ENCODE measurements at regions of chr17 and their contacts with region 1.

Region 1: DNA sequence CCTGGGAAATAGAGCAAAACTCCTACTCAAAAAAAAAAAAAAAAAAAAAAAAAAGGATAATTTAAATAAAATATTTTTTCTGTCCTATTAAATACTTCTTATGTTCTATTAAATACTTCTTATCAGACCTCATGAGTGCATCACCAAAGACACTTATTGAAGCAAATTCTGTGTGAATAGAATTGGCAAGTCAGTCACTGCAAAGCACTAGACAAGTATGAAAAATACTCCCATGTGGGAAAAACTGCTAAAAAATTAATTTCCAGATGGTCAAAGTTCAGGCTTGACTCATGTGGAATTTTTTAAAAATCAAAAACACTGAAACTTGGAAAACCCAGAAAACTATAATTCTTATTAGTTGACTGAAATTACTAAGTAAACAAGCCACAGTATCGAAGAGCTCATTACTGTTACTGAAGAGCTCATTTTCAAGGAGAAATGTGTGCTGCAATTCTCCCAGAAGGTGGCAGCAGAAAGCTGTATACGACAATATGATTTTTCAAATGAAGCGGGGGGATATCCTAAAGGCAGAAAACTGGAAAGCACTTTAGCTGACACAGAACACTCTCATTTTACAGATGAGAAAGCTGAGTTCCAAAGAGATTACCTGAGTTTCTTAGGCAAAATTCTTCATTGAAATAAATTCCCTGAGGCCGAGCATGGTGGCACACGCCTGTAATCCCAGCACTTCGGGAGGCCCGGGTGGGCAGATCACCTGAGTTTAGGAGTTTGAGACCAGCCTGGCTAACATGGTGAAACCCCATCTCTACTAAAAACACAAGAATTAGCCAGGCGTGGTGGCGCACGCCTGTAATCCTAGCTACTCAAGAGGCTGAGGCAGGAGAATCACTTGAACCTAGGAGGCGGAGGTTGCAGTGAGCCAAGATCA is 15.9 kb upstream of the FBXO47 start:
- DNase-seq: peak; percentile 71
- ATAC-seq: peak; percentile 64
- H3K4me3 Mint-ChIP-seq: no peak overlapping the region
- H3K27ac Mint-ChIP-seq: no peak overlapping the region
- H3K4me1 Mint-ChIP-seq: peaks cover 5% of the 10 kb centered on the region
- H3K27me3 Mint-ChIP-seq: peaks cover 8% of the 10 kb centered on the region

Region 2: DNA sequence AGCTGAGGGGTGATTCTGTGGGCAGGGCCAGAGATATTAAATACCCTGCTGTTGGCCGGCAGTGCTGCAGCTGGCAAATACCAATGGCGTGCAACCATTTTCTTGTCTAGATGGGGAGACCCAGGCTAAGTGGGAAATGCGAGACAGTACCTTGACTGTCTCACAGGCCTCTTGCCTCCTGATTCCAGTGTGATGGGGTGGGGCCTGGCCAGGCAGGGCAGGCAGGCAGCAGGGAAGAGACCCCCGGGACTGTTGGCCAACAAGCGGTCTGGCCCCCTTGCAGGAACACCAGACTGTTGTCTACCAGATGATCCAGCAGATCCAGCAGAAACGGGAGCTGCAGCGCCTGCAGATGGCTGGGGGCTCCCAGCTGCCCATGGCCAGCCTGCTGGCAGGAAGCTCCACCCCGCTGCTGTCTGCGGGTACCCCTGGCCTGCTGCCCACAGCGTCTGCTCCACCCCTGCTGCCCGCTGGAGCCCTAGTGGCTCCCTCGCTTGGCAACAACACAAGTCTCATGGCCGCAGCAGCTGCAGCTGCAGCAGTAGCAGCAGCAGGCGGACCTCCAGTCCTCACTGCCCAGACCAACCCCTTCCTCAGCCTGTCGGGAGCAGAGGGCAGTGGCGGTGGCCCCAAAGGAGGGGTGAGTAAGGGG is 258.6 kb before region 1 on chr17:
- CTCF ChIA-PET with region 1: no interaction called
- POLR2A ChIA-PET with region 1: no interaction called
- DNase-seq: no peak
- ATAC-seq: no peak
- H3K4me3 Mint-ChIP-seq: no peak overlapping the region
- H3K27ac Mint-ChIP-seq: peak overlapping the region; percentile 52
- H3K4me1 Mint-ChIP-seq: peaks cover 41% of the 10 kb centered on the region
- H3K27me3 Mint-ChIP-seq: no peaks in the 10 kb centered on the region

Region 3: DNA sequence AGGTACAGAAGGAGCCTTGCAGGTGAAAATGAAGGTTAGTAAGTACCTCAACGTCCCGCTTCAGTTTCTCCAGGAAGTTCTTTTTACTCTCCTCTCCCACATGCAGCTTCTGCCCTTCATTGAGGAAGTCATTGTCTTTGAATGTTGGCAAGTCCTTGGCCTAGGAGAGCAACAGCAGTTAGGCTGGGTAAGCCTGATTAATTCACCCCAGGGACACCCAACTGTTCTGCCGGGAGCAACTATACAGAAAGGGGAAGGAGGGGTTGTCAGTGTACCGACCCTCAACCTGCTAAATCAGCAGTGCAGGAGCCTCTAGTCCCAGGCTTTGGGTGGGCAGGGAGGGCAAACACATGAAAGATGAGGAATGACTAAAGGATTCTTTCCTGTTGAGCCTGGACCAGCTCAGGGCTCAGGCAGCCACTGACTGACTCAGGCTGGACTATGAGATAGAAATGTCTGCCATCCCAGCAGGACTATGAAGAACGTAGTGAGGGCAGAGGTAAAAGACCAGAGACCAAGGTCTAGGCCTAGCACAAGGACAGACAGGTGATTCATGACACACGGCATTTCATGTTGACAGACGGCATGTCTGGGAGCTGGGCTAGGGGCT is 205.4 kb before region 1 on chr17:
- CTCF ChIA-PET with region 1: no interaction called
- POLR2A ChIA-PET with region 1: no interaction called
- DNase-seq: no peak
- ATAC-seq: no peak
- H3K4me3 Mint-ChIP-seq: no peak overlapping the region
- H3K27ac Mint-ChIP-seq: no peak overlapping the region
- H3K4me1 Mint-ChIP-seq: peaks cover 8% of the 10 kb centered on the region
- H3K27me3 Mint-ChIP-seq: no peaks in the 10 kb centered on the region

Region 4: DNA sequence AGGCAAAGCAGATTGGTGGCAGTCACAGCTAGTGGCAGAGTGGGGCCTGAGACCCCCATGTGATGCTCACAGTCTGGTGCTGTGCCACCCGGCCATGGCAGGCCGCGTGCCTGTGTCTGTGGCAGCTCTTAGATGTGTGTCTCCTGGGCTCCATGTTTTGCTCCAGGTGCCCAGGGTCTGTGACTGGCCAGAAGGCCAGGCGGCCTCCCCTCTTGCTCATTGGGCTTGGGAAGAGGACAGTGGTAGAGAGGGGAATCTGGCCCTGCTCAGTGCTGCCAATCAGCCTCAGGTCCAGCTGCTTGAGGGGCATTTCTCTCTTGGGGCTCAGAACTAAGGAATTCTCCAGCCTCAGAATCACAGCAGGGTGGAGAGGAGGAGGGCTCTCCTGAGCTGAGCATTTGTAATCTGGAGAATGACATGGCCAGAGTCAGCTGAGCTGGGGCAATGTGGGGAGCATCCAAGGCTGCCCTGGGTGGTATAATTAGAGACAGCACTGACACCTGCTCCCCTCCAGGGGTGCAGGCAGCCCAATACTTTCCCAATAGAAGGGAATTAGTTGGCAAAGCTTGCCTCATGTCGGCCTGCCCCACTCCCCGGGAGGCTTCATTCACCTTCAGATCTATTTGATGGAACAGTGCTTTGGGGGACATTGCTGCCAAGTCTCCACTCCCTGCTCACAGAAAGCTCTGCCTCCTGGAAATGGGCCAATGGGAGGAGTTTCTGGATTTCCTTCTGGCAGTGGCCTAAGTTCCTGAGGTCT is 60.4 kb before region 1 on chr17:
- CTCF ChIA-PET with region 1: interaction called, 20 read pairs
- POLR2A ChIA-PET with region 1: interaction called, 3 read pairs
- DNase-seq: peak; percentile 26
- ATAC-seq: no peak
- H3K4me3 Mint-ChIP-seq: no peak overlapping the region
- H3K27ac Mint-ChIP-seq: peak overlapping the region; percentile 62
- H3K4me1 Mint-ChIP-seq: peaks cover 50% of the 10 kb centered on the region
- H3K27me3 Mint-ChIP-seq: no peaks in the 10 kb centered on the region

Region 5: DNA sequence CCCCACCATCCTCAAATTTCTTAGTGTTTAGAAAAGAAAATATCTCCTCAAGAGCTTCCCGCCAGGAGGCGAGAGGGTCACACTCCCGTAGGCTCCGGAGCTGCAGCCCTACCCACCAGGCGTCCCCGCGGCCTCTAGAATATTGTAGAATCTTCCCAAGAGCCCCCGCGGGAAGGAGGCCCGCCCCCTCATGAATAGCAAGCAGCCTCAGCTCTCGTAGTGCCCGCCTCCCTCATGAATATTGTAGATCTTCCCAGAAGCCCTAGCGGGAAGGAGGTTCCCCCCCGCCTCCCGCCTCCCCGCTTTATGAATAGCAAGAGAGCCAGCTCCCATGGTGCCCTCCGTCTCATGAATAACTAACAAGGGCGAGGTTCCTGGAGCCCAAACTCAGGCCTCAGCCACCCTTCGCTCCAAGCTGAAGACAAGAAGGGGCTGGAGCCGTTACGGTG is 15.8 kb before region 1 on chr17 and contains the start of gene FBXO47:
- CTCF ChIA-PET with region 1: interaction called, 34 read pairs
- POLR2A ChIA-PET with region 1: no interaction called
- DNase-seq: peak; percentile 91
- ATAC-seq: peak; percentile 99
- H3K4me3 Mint-ChIP-seq: peak within 1 kb of the TSS; percentile 77
- H3K27ac Mint-ChIP-seq: peak within 1 kb of the TSS; percentile 83
- H3K4me1 Mint-ChIP-seq: peaks cover 28% of the 10 kb centered on the region
- H3K27me3 Mint-ChIP-seq: peaks cover 4% of the 10 kb centered on the region
- total RNA-seq, gene FBXO47: not detected

Region 6: GRCh38 chr17:39028690-39029089 is 45.6 kb after region 1 on chr17:
- CTCF ChIA-PET with region 1: interaction called, 16 read pairs
- POLR2A ChIA-PET with region 1: no interaction called
- DNase-seq: no peak
- ATAC-seq: no peak
- H3K4me3 Mint-ChIP-seq: no peak overlapping the region
- H3K27ac Mint-ChIP-seq: no peak overlapping the region
- H3K4me1 Mint-ChIP-seq: peaks cover 8% of the 10 kb centered on the region
- H3K27me3 Mint-ChIP-seq: peaks cover 29% of the 10 kb centered on the region

Region 7: GRCh38 chr17:39077866-39078265 is 94.8 kb after region 1 on chr17:
- CTCF ChIA-PET with region 1: interaction called, 16 read pairs
- POLR2A ChIA-PET with region 1: no interaction called
- DNase-seq: no peak
- ATAC-seq: no peak
- H3K4me3 Mint-ChIP-seq: no peak overlapping the region
- H3K27ac Mint-ChIP-seq: peak overlapping the region; percentile 16
- H3K4me1 Mint-ChIP-seq: peaks cover 14% of the 10 kb centered on the region
- H3K27me3 Mint-ChIP-seq: no peaks in the 10 kb centered on the region

Region 8: DNA sequence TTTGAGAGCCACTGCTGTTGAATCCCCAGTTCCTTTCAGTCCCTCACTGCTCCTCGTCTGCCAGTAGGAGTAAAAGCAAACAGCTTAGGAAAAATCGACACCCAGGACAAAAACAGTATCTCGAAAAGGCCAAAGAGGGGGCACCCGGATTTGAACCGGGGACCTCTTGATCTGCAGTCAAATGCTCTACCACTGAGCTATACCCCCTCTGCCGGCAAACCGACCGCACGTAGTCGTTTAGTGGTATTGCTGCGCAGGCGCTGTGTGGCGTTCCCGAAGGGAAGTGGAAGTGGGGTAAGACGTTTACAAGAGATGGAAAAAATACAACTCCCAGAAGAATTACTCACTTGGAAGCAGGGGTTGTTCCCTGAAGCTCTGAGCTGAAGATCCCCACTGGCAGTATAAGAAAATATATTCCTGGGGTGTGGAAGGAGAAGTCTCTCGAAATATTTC is 170.5 kb after region 1 on chr17:
- CTCF ChIA-PET with region 1: interaction called, 289 read pairs
- POLR2A ChIA-PET with region 1: interaction called, 8 read pairs
- DNase-seq: peak; percentile 93
- ATAC-seq: peak; percentile 62
- H3K4me3 Mint-ChIP-seq: peak overlapping the region; percentile 98
- H3K27ac Mint-ChIP-seq: peak overlapping the region; percentile 93
- H3K4me1 Mint-ChIP-seq: peaks cover 35% of the 10 kb centered on the region
- H3K27me3 Mint-ChIP-seq: peaks cover 23% of the 10 kb centered on the region

Region 9: DNA sequence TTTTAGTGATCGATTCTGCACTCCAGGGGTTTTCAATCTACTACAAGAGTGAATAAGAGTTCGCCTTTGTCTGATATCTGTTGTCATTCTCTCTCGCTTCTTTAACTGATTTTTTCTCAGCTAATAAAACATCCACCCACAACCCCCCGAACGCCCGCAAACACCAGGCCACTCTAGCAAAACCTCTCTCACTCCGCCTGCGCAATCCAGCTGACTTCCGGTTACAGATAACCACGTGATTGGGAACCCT is 216.6 kb after region 1 on chr17:
- CTCF ChIA-PET with region 1: interaction called, 11 read pairs
- POLR2A ChIA-PET with region 1: no interaction called
- DNase-seq: peak; percentile 94
- ATAC-seq: peak; percentile 57
- H3K4me3 Mint-ChIP-seq: peak overlapping the region; percentile 99
- H3K27ac Mint-ChIP-seq: peak overlapping the region; percentile 97
- H3K4me1 Mint-ChIP-seq: peaks cover 63% of the 10 kb centered on the region
- H3K27me3 Mint-ChIP-seq: no peaks in the 10 kb centered on the region